ENCODE measurements at regions of chrX and their contacts with region 1.

Region 1: GRCh38 chrX:154918060-154918483 is 31.9 kb downstream of the F8A1 start:
- DNase-seq: peak; percentile 2 to 14
- ATAC-seq: peak in 1 of 2 donors; percentile 63
- H3K4me3 ChIP-seq: peak overlapping the region in 2 of 4 donors; percentile 17 to 27
- H3K27ac ChIP-seq: no peak overlapping the region
- H3K4me1 ChIP-seq: no peaks in the 10 kb centered on the region
- H3K27me3 ChIP-seq: no peaks in the 10 kb centered on the region
- CTCF ChIP-seq: peak in 4 of 5 experiments; percentile 22 to 47 (median 37)
- POLR2A ChIP-seq: no peak

Region 2: GRCh38 chrX:154986826-154987576 is 68.9 kb after region 1 on chrX:
- in situ Hi-C with region 1: no loop called
- intact Hi-C with region 1: no loop called
- DNase-seq: no peak
- ATAC-seq: no peak
- H3K4me3 ChIP-seq: no peak overlapping the region
- H3K27ac ChIP-seq: no peak overlapping the region
- H3K4me1 ChIP-seq: no peaks in the 10 kb centered on the region
- H3K27me3 ChIP-seq: no peaks in the 10 kb centered on the region
- CTCF ChIP-seq: no peak
- POLR2A ChIP-seq: no peak

Region 3: DNA sequence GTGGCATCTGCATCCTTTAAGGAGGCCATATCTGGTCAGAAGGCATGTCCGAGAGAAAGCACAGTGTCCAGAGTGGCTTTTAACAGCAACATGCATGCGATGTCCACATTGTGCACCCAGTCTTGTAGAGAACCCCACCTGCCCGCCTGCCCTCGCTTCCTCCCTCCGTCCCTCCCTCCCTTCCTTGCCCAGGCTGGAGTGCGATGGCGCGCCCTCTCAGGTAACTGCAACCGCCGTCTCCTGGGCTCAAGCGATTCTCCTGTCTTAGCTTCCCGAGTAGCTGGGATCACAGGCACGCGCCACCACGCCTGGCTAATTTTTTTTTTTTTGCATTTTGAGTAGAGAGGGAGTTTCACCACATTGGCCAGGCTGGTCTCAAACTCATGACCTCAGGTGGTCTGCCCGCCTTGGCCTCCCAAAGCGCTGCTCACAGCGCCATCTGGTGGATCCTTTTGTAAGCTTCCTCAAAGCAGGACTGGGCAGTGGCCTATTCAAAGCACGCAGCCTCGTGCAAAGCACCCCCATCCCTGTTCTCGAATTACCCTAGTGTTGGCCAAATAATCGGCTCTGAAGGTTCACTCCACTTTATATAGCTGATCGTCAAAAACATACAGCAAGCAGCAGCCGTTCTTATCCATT is 168.2 kb after region 1 on chrX:
- in situ Hi-C with region 1: no loop called
- intact Hi-C with region 1: loop called (anchors 10 kb)
- DNase-seq: peak in 1 of 2 donors; percentile 17
- ATAC-seq: peak in 1 of 2 donors; percentile 46
- H3K4me3 ChIP-seq: no peak overlapping the region
- H3K27ac ChIP-seq: no peak overlapping the region
- H3K4me1 ChIP-seq: no peaks in the 10 kb centered on the region
- H3K27me3 ChIP-seq: no peaks in the 10 kb centered on the region
- CTCF ChIP-seq: peak; percentile 17 to 56 (median 38)
- POLR2A ChIP-seq: no peak